K562 (cell line): ENCODE measurements at regions of chr1 and their contacts with region 1.

Region 1: GRCh38 chr1:223683586-223684487 is 18.3 kb upstream of the CAPN8 start:
- DNase-seq: peak; percentile 45 to 78 (median 59)
- ATAC-seq: peak; percentile 87
- H3K4me3 ChIP-seq: no peak overlapping the region
- H3K27ac ChIP-seq: no peak overlapping the region
- H3K4me1 ChIP-seq: no peaks in the 10 kb centered on the region; a peak in 2 of 5 replicates
- H3K27me3 ChIP-seq: peaks cover 21 to 48% of the 10 kb centered on the region in 2 experiments
- CTCF ChIP-seq: peak; percentile 83 to 97 (median 89)
- EP300 ChIP-seq: no peak
- POLR2A ChIP-seq: no peak
- RAD21 ChIP-seq: peak; percentile 93 to 98

Region 2: GRCh38 chr1:222792744-222793143 is 891.1 kb before region 1 on chr1:
- CTCF ChIA-PET with region 1: interaction called, 4 read pairs
- POLR2A ChIA-PET with region 1: no interaction called
- in situ Hi-C with region 1: no loop called
- intact Hi-C with region 1: loop called (anchors 2 kb)
- DNase-seq: peak in 3 of 4 experiments; percentile 16 to 38 (median 29)
- ATAC-seq: peak; percentile 42; the same call in 1 of the 3 replicates
- H3K4me3 ChIP-seq: no peak overlapping the region
- H3K27ac ChIP-seq: no peak overlapping the region
- H3K4me1 ChIP-seq: no peaks in the 10 kb centered on the region
- H3K27me3 ChIP-seq: 0 out of 5 replicates have a peak, but pooled peaks cover 0 to 5% of the 10 kb centered on the region in 2 experiments
- CTCF ChIP-seq: peak in 2 of 3 experiments; percentile 33 to 64; a peak in 4 of 6 replicates
- EP300 ChIP-seq: no peak
- POLR2A ChIP-seq: no peak
- RAD21 ChIP-seq: peak; percentile 79 to 82

Region 3: GRCh38 chr1:223133824-223134435 is 549.9 kb before region 1 on chr1:
- CTCF ChIA-PET with region 1: interaction called, 14 read pairs
- POLR2A ChIA-PET with region 1: no interaction called
- in situ Hi-C with region 1: loop called (anchors 25 kb)
- intact Hi-C with region 1: loop called (anchors 2 kb)
- DNase-seq: peak; percentile 89 to 97 (median 95)
- ATAC-seq: peak; percentile 91
- H3K4me3 ChIP-seq: no peak overlapping the region
- H3K27ac ChIP-seq: no peak overlapping the region
- H3K4me1 ChIP-seq: peaks cover 0 to 11% of the 10 kb centered on the region in 2 experiments; a peak in 2 of 5 replicates
- H3K27me3 ChIP-seq: peaks cover 2 to 19% of the 10 kb centered on the region in 2 experiments; a peak in 2 of 5 replicates
- CTCF ChIP-seq: peak; percentile 92 to 96 (median 95); a peak in 5 of 6 replicates
- EP300 ChIP-seq: no peak
- POLR2A ChIP-seq: no peak
- RAD21 ChIP-seq: peak; percentile 90 to 93

Region 4: DNA sequence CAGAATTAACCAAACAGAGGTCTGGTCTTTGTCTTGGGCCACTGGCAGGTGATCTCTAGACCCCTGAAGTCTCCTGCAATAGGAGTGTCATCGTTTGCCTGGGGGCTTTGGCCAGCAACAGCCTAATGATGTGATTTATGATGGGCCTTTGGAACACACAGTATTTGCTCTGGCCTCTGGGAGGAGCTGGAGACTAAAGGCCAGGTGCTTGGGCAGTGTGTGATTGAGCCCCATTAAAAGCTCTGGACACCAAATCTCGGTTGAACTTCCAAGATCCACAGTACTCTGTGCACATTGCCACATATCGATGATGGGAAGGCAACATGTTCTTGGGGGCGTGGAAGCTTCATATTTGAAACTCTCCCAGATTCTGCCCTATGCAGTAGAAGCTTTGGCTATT is 508.8 kb before region 1 on chr1:
- CTCF ChIA-PET with region 1: no interaction called
- POLR2A ChIA-PET with region 1: no interaction called
- in situ Hi-C with region 1: no loop called
- intact Hi-C with region 1: loop called (anchors 2 kb)
- DNase-seq: peak in 2 of 4 experiments; percentile 52 to 61
- ATAC-seq: peak; percentile 96
- H3K4me3 ChIP-seq: no peak overlapping the region
- H3K27ac ChIP-seq: no peak overlapping the region
- H3K4me1 ChIP-seq: no peaks in the 10 kb centered on the region; a peak in 2 of 5 replicates
- H3K27me3 ChIP-seq: no peaks in the 10 kb centered on the region; a peak in 1 of 5 replicates
- CTCF ChIP-seq: peak; percentile 66 to 83 (median 68)
- EP300 ChIP-seq: no peak
- POLR2A ChIP-seq: no peak
- RAD21 ChIP-seq: peak; percentile 88 to 92

Region 5: DNA sequence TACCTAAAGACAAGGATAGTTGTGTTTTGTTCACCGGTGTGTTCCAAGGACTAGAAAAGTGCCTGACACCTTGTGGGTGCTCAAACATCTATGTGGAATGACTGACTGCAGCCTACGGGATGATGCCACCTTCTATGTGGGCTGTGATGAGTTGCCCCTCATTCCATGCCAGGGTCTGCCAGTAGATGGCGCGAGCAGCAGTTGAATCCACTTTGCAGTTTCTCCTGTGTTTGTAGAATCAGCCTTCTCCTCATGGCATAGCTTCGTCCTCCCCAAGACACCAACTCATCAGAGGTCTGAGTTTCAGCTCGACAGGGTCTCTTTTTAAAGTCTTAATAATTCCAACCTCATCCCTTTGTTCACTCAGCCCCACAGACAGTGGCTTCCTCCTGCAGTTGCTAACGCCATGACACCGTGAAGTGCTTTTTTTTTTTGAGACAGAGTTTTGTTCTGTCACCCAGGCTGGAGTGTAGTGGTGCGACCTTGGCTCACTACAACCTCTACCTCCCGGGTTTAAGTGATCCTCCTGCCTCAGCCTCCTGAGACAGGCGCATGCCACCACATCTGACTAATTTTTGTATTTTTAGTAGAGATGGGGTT is 152.0 kb before region 1 on chr1:
- CTCF ChIA-PET with region 1: no interaction called
- POLR2A ChIA-PET with region 1: no interaction called
- in situ Hi-C with region 1: no loop called
- intact Hi-C with region 1: loop called (anchors 2 kb)
- DNase-seq: peak; percentile 58 to 60 (median 60)
- ATAC-seq: peak; percentile 93
- H3K4me3 ChIP-seq: no peak overlapping the region
- H3K27ac ChIP-seq: no peak overlapping the region
- H3K4me1 ChIP-seq: no peaks in the 10 kb centered on the region
- H3K27me3 ChIP-seq: peaks cover 18 to 31% of the 10 kb centered on the region in 2 experiments; a peak in 4 of 5 replicates
- CTCF ChIP-seq: peak; percentile 76 to 89 (median 82)
- EP300 ChIP-seq: no peak
- POLR2A ChIP-seq: no peak
- RAD21 ChIP-seq: peak; percentile 35 to 72

Region 6: DNA sequence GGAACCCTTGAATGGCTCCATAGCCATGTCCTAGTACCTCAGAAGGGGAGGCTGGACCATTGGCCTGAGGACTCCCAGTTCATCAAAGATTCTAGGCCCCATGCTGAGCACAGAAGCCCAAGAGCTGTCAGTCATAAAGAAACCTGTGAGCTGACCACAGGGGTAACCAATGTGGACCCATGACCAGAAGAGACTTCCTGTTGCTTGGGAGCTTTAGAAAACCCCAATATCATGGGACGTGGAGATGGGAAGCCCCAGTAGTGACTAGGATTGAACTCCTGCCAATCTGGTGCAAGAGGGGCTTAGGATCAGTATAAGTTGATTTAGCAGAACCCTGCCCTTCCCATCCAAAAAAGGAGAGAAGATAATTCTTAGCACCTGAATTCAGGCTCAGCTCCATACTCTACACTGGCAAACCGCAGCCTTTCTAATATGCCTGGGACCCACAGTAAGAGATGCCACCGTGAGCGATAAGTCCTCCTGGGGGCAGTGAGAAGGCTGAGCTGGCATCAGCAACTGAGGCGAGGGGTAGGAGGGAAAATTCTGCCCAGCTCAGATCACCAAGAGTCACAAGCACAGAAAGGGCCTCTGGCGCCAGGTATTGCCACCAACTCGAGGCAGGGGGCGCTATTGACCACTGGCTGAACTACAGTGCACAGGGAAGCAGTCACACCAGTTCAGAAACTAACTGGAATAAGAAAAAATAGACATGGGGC is 127.3 kb before region 1 on chr1:
- CTCF ChIA-PET with region 1: interaction called, 18 read pairs
- POLR2A ChIA-PET with region 1: no interaction called
- in situ Hi-C with region 1: no loop called
- intact Hi-C with region 1: no loop called
- DNase-seq: peak; percentile 75 to 78 (median 76)
- ATAC-seq: peak; percentile 99
- H3K4me3 ChIP-seq: no peak overlapping the region
- H3K27ac ChIP-seq: no peak overlapping the region
- H3K4me1 ChIP-seq: no peaks in the 10 kb centered on the region
- H3K27me3 ChIP-seq: peaks cover 6 to 25% of the 10 kb centered on the region in 2 experiments; a peak in 4 of 5 replicates
- CTCF ChIP-seq: peak; percentile 91 to 96 (median 95)
- EP300 ChIP-seq: no peak
- POLR2A ChIP-seq: no peak
- RAD21 ChIP-seq: peak; percentile 81 to 93

Region 7: DNA sequence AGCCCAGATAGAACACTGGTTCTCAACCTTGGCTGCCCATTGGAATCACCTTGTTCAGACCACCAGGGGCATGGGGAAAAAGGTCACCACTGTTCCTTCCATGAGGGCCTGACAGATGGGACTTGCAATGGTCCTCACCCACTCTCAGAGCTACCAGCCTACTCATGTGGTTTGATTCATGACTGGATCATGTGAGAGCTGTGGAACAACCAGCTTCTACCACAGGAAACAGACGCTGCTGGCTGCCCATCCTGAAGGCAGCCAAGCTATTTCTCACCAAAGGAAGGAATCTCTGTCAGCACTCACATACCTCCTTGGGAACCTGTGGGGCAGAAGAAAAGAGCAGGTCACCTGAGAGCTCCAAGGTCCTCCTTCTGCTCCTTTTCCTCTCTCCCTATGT is 71.9 kb before region 1 on chr1:
- CTCF ChIA-PET with region 1: interaction called, 3 read pairs
- POLR2A ChIA-PET with region 1: no interaction called
- in situ Hi-C with region 1: loop called (anchors 5 kb)
- intact Hi-C with region 1: no loop called
- DNase-seq: no peak
- ATAC-seq: no peak
- H3K4me3 ChIP-seq: no peak overlapping the region
- H3K27ac ChIP-seq: no peak overlapping the region
- H3K4me1 ChIP-seq: no peaks in the 10 kb centered on the region
- H3K27me3 ChIP-seq: peaks cover 9 to 25% of the 10 kb centered on the region in 2 experiments
- CTCF ChIP-seq: no peak
- EP300 ChIP-seq: no peak
- POLR2A ChIP-seq: no peak
- RAD21 ChIP-seq: no peak

Region 8: GRCh38 chr1:223704921-223705878 is 21.4 kb after region 1 on chr1:
- CTCF ChIA-PET with region 1: no interaction called
- POLR2A ChIA-PET with region 1: no interaction called
- in situ Hi-C with region 1: no loop called
- intact Hi-C with region 1: no loop called
- DNase-seq: peak in 1 of 4 experiments; percentile 15
- ATAC-seq: no peak
- H3K4me3 ChIP-seq: no peak overlapping the region
- H3K27ac ChIP-seq: no peak overlapping the region
- H3K4me1 ChIP-seq: peaks cover 42 to 53% of the 10 kb centered on the region in 2 experiments
- H3K27me3 ChIP-seq: no peaks in the 10 kb centered on the region
- CTCF ChIP-seq: no peak
- EP300 ChIP-seq: no peak
- POLR2A ChIP-seq: no peak
- RAD21 ChIP-seq: no peak